GM12878 (cell line): ENCODE measurements at regions of chr17 and their contacts with region 1.

Region 1: DNA sequence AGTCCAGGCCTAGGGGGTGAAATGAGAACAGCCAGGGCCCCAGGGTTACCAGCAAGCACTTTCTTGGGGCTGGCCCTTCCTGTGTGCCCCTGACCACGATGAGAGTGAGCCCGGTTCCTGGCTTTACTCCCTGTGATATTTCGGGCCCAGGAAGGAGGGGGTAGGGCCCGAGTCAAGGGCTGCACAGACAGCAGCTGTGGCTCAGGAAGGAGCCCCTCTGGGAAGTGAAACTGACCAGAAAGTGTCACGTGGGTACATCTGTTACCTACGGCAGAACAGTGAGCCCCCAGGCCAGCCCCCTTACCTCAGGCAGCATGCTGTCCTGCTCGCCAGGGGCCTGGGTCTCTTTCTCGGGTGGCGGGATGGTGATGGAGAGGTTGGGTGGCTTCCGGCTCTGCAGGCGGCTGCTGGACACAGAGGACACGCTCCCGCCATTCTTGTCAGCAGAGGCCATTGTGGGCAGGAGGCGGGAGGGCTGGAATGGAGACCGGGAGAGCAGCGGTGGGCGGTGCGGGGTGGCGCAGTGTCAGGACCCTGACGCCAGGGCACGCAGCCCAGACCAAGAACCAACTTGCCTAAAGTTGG is 13.8 kb downstream of the AANAT start:
- DNase-seq: peak; percentile 71
- ATAC-seq: peak; percentile 82
- H3K4me3 ChIP-seq: peak overlapping the region; percentile 66
- H3K27ac ChIP-seq: peak overlapping the region; percentile 99
- H3K4me1 ChIP-seq: peaks cover 53% of the 10 kb centered on the region
- H3K27me3 ChIP-seq: no peaks in the 10 kb centered on the region
- CTCF ChIP-seq: no peak
- EP300 ChIP-seq: peak; percentile 69 to 74
- POLR2A ChIP-seq: peak; percentile 67
- RAD21 ChIP-seq: no peak

Region 2: GRCh38 chr17:76492989-76493501 is 11.9 kb after region 1 on chr17:
- CTCF ChIA-PET with region 1: interaction called, 33 read pairs
- POLR2A ChIA-PET with region 1: interaction called, 101 read pairs
- RAD21 ChIA-PET with region 1: interaction called, 50 read pairs
- SMC1A ChIA-PET with region 1: interaction called, 115 read pairs
- in situ Hi-C with region 1: no loop called
- intact Hi-C with region 1: loop called (anchors 1 kb)
- DNase-seq: peak; percentile 80
- ATAC-seq: peak; percentile 79
- H3K4me3 ChIP-seq: peak overlapping the region; percentile 47; the same call in 1 of the 2 replicates
- H3K27ac ChIP-seq: peak overlapping the region; percentile 80
- H3K4me1 ChIP-seq: peaks cover 67% of the 10 kb centered on the region
- H3K27me3 ChIP-seq: no peaks in the 10 kb centered on the region
- CTCF ChIP-seq: no peak
- EP300 ChIP-seq: no peak; a peak in 1 of 4 replicates
- POLR2A ChIP-seq: peak; percentile 7; the same call in 1 of the 2 replicates
- RAD21 ChIP-seq: no peak